Activated CD8-positive, alpha-beta T cell treated with anti-CD3 and anti-CD28 coated beads, Interleukin-2, amount 10 ng/mL, durations not matched to agents 7 days and 5 days (primary cell): ENCODE measurements at regions of chr1 and their contacts with region 1.

Region 1: GRCh38 chr1:35715568-35716002 is 3.1 kb downstream of the C1orf216 start:
- DNase-seq: peak; percentile 87
- ATAC-seq: peak; percentile 62
- H3K4me3 Mint-ChIP-seq: peak overlapping the region; percentile 35
- H3K27ac Mint-ChIP-seq: no peak overlapping the region
- H3K4me1 Mint-ChIP-seq: peaks cover 35% of the 10 kb centered on the region
- H3K27me3 Mint-ChIP-seq: no peaks in the 10 kb centered on the region

Region 2: DNA sequence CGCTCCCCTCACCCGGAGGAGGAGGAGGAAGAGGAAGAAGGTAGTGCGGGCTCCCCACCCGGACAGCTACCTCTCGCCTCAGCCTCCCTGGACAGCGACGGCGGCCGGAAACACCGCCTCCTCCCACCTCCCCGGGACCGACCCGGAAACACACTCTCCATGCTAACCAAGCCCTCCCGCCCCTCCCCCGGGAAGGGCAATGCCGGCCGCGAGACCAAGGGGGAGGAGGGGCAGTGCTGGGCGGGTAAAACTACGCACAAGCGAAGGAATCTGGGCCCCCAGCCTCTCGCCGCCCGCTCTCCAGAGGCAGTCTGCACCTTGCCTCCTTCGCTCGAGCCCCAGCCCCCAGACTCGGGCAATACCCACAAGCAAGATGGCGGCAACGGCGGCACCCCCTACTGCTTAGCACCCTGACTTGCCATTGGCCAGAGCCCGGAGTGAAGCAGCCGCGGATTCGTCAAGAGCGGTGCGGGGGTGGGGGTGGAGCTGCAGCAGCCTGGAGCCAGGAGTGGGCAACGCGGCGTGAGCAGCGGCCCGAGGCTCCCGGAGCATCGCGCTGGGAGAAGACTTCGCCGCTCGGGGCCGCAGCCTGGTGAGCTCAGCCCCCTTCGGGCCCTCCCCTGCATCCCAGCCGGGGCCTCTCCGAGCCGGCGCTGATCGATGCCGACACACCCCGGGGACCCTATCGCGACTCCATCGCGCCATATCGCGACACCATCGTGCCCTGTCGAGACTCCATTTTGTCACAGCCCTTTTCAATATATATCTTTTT is 158.1 kb before region 1 on chr1 and contains the starts of genes KIAA0319L and NCDN:
- CTCF ChIA-PET with region 1: interaction called, 13 read pairs
- POLR2A ChIA-PET with region 1: interaction called, 5 read pairs
- DNase-seq: peak; percentile 98
- ATAC-seq: peak; percentile 95
- H3K4me3 Mint-ChIP-seq: peak within 1 kb of the TSS; percentile 96
- H3K27ac Mint-ChIP-seq: peak within 1 kb of the TSS; percentile 98
- H3K4me1 Mint-ChIP-seq: peaks cover 46% of the 10 kb centered on the region
- H3K27me3 Mint-ChIP-seq: no peaks in the 10 kb centered on the region
- total RNA-seq, gene KIAA0319L: 27.0 to 36.1 TPM
- total RNA-seq, gene NCDN: 19.3 to 19.4 TPM

Region 3: DNA sequence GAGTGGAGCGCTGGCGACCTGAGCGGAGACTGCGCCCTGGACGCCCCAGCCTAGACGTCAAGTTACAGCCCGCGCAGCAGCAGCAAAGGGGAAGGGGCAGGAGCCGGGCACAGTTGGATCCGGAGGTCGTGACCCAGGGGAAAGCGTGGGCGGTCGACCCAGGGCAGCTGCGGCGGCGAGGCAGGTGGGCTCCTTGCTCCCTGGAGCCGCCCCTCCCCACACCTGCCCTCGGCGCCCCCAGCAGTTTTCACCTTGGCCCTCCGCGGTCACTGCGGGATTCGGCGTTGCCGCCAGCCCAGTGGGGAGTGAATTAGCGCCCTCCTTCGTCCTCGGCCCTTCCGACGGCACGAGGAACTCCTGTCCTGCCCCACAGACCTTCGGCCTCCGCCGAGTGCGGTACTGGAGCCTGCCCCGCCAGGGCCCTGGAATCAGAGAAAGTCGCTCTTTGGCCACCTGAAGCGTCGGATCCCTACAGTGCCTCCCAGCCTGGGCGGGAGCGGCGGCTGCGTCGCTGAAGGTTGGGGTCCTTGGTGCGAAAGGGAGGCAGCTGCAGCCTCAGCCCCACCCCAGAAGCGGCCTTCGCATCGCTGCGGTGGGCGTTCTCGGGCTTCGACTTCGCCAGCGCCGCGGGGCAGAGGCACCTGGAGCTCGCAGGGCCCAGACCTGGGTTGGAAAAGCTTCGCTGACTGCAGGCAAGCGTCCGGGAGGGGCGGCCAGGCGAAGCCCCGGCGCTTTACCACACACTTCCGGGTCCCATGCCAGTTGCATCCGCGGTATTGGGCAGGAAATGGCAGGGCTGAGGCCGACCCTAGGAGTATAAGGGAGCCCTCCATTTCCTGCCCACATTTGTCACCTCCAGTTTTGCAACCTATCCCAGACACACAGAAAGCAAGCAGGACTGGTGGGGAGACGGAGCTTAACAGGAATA is 138.2 kb before region 1 on chr1:
- CTCF ChIA-PET with region 1: interaction called, 46 read pairs
- POLR2A ChIA-PET with region 1: no interaction called
- DNase-seq: peak; percentile 85
- ATAC-seq: peak; percentile 87
- H3K4me3 Mint-ChIP-seq: peak overlapping the region; percentile 81
- H3K27ac Mint-ChIP-seq: peak overlapping the region; percentile 94
- H3K4me1 Mint-ChIP-seq: peaks cover 34% of the 10 kb centered on the region
- H3K27me3 Mint-ChIP-seq: peaks cover 8% of the 10 kb centered on the region

Region 4: DNA sequence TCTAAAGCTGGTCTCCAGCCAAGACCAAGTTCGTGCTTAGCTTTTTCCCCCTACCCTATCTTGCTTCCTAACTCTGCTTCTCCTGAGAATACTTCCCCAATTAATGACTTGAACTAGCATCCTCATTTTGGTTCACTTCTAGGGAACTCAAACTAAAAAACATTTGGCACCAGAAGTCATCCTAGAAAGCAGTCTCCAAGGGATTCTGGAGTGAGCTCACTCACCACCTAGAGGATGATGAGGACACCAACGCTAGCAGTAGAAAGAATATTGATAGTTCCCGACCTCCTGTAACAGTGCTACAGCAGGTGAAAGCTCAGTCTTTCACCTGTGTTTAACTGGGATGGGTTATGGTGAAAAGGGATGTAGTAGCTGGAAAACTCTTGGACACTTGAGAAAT is 69.5 kb before region 1 on chr1:
- CTCF ChIA-PET with region 1: interaction called, 16 read pairs
- POLR2A ChIA-PET with region 1: interaction called, 4 read pairs
- DNase-seq: no peak
- ATAC-seq: no peak
- H3K4me3 Mint-ChIP-seq: no peak overlapping the region
- H3K27ac Mint-ChIP-seq: no peak overlapping the region
- H3K4me1 Mint-ChIP-seq: peaks cover 6% of the 10 kb centered on the region
- H3K27me3 Mint-ChIP-seq: peaks cover 48% of the 10 kb centered on the region

Region 5: GRCh38 chr1:35675773-35676172 is 39.8 kb before region 1 on chr1:
- CTCF ChIA-PET with region 1: no interaction called
- POLR2A ChIA-PET with region 1: no interaction called
- DNase-seq: no peak
- ATAC-seq: no peak
- H3K4me3 Mint-ChIP-seq: no peak overlapping the region
- H3K27ac Mint-ChIP-seq: no peak overlapping the region
- H3K4me1 Mint-ChIP-seq: no peaks in the 10 kb centered on the region
- H3K27me3 Mint-ChIP-seq: peaks cover 26% of the 10 kb centered on the region

Region 6: GRCh38 chr1:35702508-35702907 is 13.1 kb before region 1 on chr1:
- CTCF ChIA-PET with region 1: interaction called, 60 read pairs
- POLR2A ChIA-PET with region 1: interaction called, 3 read pairs
- DNase-seq: no peak
- ATAC-seq: no peak
- H3K4me3 Mint-ChIP-seq: no peak overlapping the region
- H3K27ac Mint-ChIP-seq: no peak overlapping the region
- H3K4me1 Mint-ChIP-seq: peaks cover 9% of the 10 kb centered on the region
- H3K27me3 Mint-ChIP-seq: peaks cover 68% of the 10 kb centered on the region

Region 7: DNA sequence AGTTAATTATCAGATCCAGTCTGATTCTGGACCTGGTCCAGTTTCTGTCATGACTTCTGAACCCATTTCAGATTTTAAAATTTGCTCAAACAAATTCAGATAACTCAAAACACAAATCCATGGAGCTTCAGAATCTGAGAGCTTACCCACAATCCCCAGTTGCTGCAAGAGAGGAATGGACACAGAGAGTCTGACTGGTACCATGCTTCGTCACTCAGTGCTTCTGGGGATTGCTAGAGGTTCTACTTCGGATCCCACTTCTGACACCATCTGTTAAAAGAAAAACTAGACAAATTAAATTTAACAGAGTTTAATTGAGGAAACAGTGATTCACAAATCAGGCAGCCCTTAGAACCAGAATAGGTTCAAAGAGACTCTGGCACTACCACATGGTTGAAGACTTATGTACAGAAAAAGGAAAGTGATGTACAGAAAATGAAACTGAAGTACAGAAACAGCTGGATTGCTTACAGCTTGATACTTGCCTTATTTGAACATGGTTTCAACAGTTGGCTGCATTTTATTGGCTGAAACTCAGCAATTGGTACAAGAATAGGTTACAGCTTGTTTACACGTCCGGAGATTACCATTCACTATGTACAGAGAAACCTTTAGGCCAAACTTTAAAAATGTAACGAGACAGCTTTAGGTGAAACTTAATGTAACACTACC is 307.6 kb after region 1 on chr1:
- CTCF ChIA-PET with region 1: no interaction called
- POLR2A ChIA-PET with region 1: no interaction called
- DNase-seq: no peak
- ATAC-seq: peak; percentile 76
- H3K4me3 Mint-ChIP-seq: peak overlapping the region; percentile 12
- H3K27ac Mint-ChIP-seq: peak overlapping the region; percentile 65
- H3K4me1 Mint-ChIP-seq: peaks cover 16% of the 10 kb centered on the region
- H3K27me3 Mint-ChIP-seq: no peaks in the 10 kb centered on the region